Naive thymus-derived CD4-positive, alpha-beta T cell (primary cell): ENCODE measurements at regions of chr17 and their contacts with region 1.

Region 1: DNA sequence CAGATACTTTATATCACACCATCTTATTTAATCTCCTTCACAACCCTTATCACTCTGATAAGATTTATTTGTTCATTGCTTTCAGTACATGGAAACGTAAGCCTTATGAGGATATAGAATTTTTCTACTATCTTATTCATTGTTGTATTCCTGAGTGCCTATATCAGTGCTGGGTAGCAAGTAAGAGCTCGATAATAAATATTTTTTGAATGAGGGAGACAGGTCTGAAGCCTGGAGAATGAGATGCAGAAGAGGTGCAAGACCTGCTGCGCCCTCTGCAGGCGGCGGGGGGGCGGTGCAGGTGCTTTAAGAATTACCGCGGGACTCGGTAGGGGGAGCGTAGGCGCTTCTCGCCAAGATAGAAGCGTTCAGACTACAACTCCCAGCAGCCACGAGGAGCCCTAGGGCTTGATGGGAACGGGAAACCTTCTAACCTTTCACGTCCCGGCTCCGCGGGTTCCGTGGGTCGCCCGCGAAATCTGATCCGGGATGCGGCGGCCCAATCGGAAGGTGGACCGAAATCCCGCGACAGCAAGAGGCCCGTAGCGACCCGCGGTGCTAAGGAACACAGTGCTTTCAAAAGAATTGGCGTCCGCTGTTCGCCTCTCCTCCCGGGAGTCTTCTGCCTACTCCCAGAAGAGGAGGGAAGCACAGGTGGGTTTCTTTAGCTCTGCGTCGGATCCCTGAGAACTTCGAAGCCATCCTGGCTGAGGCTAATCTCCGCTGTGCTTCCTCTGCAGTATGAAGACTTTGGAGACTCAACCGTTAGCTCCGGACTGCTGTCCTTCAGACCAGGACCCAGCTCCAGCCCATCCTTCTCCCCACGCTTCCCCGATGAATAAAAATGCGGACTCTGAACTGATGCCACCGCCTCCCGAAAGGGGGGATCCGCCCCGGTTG is at the start of gene WRAP53:
- DNase-seq: peak; percentile 93 to 97 (median 96)
- ATAC-seq: peak; percentile 89
- H3K4me3 ChIP-seq: peak within 1 kb of the TSS; percentile 96
- H3K4me3 Mint-ChIP-seq: peak within 1 kb of the TSS; percentile 95 to 99 (median 97)
- H3K27ac ChIP-seq: peak within 1 kb of the TSS; percentile 96
- H3K27ac Mint-ChIP-seq: peak within 1 kb of the TSS; percentile 99 to 100 (median 100)
- H3K4me1 ChIP-seq: peaks cover 28 to 31% of the 10 kb centered on the region in 2 donors
- H3K4me1 Mint-ChIP-seq: peaks cover 31 to 47% (median 41%) of the 10 kb centered on the region in 7 donors
- H3K27me3 ChIP-seq: no peaks in the 10 kb centered on the region
- H3K27me3 Mint-ChIP-seq: no peaks in the 10 kb centered on the region
- total RNA-seq, gene WRAP53: 6.7 to 21.1 (median 9.6) TPM

Region 2: GRCh38 chr17:7252176-7253043 is 435.7 kb before region 1 on chr17 and contains the start of gene ELP5:
- CTCF ChIA-PET with region 1: no interaction called
- POLR2A ChIA-PET with region 1: interaction called, 3 read pairs
- intact Hi-C with region 1: loop called in 1 of 2 experiments (anchors 5 kb)
- DNase-seq: peak in 5 of 9 donors; percentile 73 to 90 (median 83)
- ATAC-seq: peak; percentile 69
- H3K4me3 ChIP-seq: peak within 1 kb of the TSS; percentile 91
- H3K4me3 Mint-ChIP-seq: peak within 1 kb of the TSS; percentile 85 to 98 (median 96)
- H3K27ac ChIP-seq: peak within 1 kb of the TSS; percentile 94
- H3K27ac Mint-ChIP-seq: peak within 1 kb of the TSS; percentile 95 to 100 (median 99)
- H3K4me1 ChIP-seq: peaks cover 22 to 32% of the 10 kb centered on the region in 2 donors
- H3K4me1 Mint-ChIP-seq: peaks cover 29 to 51% (median 42%) of the 10 kb centered on the region in 7 donors
- H3K27me3 ChIP-seq: no peaks in the 10 kb centered on the region
- H3K27me3 Mint-ChIP-seq: peaks cover 0 to 4% (median 0%) of the 10 kb centered on the region in 5 donors
- total RNA-seq, gene ELP5: 26.9 to 49.1 (median 32.9) TPM

Region 3: DNA sequence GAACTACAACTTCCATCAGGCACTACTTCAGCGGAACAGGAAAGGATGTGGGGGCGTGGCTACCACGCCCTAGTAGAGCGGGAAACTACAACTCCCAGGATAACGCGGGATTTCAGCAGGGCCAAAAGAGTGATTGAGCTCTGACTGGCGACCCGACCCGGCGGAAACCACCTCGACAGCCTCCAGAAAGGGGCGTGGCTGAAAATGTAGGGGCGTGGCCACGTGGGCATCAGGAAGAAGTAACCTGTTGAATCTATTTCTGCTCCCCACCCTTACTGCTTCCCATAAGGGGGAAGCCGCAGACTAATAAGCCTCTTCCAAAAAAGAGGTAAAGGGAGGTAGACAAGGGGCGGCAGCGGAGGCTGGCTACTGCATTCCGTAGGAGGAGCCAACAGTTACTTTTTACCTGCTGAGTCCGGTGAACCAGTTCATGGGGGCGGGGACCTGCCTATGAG is 252.9 kb before region 1 on chr17 and contains the start of gene TMEM102:
- CTCF ChIA-PET with region 1: interaction called, 12 read pairs
- POLR2A ChIA-PET with region 1: interaction called, 48 read pairs
- intact Hi-C with region 1: loop called (anchors 1 kb)
- DNase-seq: peak; percentile 92 to 99 (median 99)
- ATAC-seq: peak; percentile 94
- H3K4me3 ChIP-seq: peak within 1 kb of the TSS; percentile 65
- H3K4me3 Mint-ChIP-seq: peak within 1 kb of the TSS; percentile 86 to 96 (median 94)
- H3K27ac ChIP-seq: peak within 1 kb of the TSS; percentile 83
- H3K27ac Mint-ChIP-seq: peak within 1 kb of the TSS; percentile 89 to 97 (median 95)
- H3K4me1 ChIP-seq: peaks cover 16 to 38% of the 10 kb centered on the region in 2 donors
- H3K4me1 Mint-ChIP-seq: peaks cover 26 to 42% (median 36%) of the 10 kb centered on the region in 7 donors
- H3K27me3 ChIP-seq: peaks cover 0 to 9% of the 10 kb centered on the region in 2 donors
- H3K27me3 Mint-ChIP-seq: peaks cover 11 to 13% (median 12%) of the 10 kb centered on the region in 5 donors
- total RNA-seq, gene TMEM102: 8.2 to 19.1 (median 16.5) TPM

Region 4: DNA sequence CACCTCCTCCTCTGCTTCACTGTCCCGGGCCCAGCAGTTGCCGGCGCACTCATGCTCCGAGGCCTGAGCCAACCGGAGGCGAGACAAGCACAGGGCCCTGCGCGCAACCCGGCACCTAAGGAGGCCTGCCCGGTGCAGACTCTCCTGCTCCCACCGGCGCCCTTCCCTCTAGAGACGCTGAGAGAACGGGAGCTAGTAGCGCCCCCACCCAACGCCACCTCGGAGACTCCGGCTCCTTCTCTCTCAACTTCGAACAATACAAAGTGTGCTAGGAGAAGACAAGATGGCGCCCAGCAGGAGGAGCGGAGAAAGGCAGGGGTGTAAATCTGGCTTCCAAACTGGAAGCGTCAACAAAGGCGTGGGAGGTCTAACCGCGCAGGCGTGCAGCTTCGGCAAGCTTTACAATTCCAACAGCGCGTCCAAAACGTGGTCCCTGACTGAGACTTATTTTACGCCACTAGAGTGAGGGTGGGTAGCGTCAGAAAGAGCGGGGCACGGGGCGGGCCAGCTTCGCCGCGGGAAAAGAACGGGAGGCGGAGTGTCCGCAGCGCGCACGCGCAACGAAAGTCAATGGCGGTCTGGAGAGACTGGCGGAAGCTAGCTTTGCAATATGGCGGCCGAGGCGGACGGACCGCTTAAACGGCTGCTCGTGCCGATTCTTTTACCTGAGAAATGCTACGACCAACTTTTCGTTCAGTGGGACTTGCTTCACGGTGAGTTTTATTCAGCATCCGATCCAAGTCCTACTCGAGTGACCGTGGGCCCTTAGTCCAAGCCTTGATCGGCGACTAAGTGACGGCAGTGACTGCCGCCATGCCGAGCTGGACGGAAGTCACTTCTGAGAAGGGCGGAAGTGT is 104.7 kb before region 1 on chr17 and contains the start of gene MPDU1:
- CTCF ChIA-PET with region 1: interaction called, 10 read pairs
- POLR2A ChIA-PET with region 1: interaction called, 94 read pairs
- intact Hi-C with region 1: loop called (anchors 1 kb)
- DNase-seq: peak; percentile 89 to 98 (median 97)
- ATAC-seq: peak; percentile 80
- H3K4me3 ChIP-seq: peak within 1 kb of the TSS; percentile 100
- H3K4me3 Mint-ChIP-seq: peak within 1 kb of the TSS; percentile 89 to 100 (median 99)
- H3K27ac ChIP-seq: peak within 1 kb of the TSS; percentile 95
- H3K27ac Mint-ChIP-seq: peak within 1 kb of the TSS; percentile 98 to 100 (median 100)
- H3K4me1 ChIP-seq: peaks cover 28 to 35% of the 10 kb centered on the region in 2 donors
- H3K4me1 Mint-ChIP-seq: peaks cover 33 to 60% (median 55%) of the 10 kb centered on the region in 7 donors
- H3K27me3 ChIP-seq: no peaks in the 10 kb centered on the region
- H3K27me3 Mint-ChIP-seq: no peaks in the 10 kb centered on the region
- total RNA-seq, gene MPDU1: 25.4 to 79.8 (median 31.4) TPM

Region 5: GRCh38 chr17:7667656-7668406 is 20.3 kb before region 1 on chr17:
- CTCF ChIA-PET with region 1: interaction called, 5 read pairs
- POLR2A ChIA-PET with region 1: interaction called, 86 read pairs
- intact Hi-C with region 1: no loop called
- DNase-seq: no peak
- ATAC-seq: no peak
- H3K4me3 ChIP-seq: no peak overlapping the region
- H3K4me3 Mint-ChIP-seq: no peak overlapping the region
- H3K27ac ChIP-seq: no peak overlapping the region
- H3K27ac Mint-ChIP-seq: peak overlapping the region in 4 of 9 donors; percentile 13 to 70 (median 29)
- H3K4me1 ChIP-seq: no peaks in the 10 kb centered on the region
- H3K4me1 Mint-ChIP-seq: no peaks in the 10 kb centered on the region
- H3K27me3 ChIP-seq: no peaks in the 10 kb centered on the region
- H3K27me3 Mint-ChIP-seq: no peaks in the 10 kb centered on the region

Region 6: DNA sequence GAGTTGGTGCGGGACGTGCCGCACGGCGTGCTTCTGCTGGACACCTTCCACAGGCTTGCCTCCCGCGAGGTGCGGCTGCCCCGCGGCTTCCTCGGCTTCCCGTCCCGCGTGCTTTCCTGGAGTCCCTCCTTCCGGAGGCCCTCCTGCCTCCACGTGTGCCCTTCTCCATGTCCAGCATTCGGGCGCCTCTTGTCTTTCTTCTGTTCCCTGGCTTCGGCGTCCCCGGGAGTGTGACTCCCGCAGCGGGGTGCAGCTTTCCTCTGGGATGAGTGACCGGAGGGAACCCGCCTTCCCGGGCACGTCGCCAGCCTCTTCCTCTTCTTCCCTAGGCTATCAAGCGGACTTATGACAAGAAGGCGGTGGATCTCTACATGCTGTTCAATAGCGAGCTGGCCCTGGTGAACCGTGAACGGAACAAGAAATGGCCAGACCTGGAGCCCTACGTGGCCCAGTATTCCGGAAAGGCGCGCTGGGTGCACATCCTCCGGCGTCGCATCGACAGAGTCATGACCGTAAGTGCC is 52.4 kb after region 1 on chr17:
- CTCF ChIA-PET with region 1: no interaction called
- POLR2A ChIA-PET with region 1: no interaction called
- intact Hi-C with region 1: no loop called
- DNase-seq: no peak
- ATAC-seq: no peak
- H3K4me3 ChIP-seq: no peak overlapping the region
- H3K4me3 Mint-ChIP-seq: peak overlapping the region in 2 of 10 donors; percentile 59 to 67
- H3K27ac ChIP-seq: no peak overlapping the region
- H3K27ac Mint-ChIP-seq: no peak overlapping the region
- H3K4me1 ChIP-seq: no peaks in the 10 kb centered on the region
- H3K4me1 Mint-ChIP-seq: peaks cover 0 to 6% (median 0%) of the 10 kb centered on the region in 7 donors
- H3K27me3 ChIP-seq: no peaks in the 10 kb centered on the region
- H3K27me3 Mint-ChIP-seq: peaks cover 7 to 33% (median 27%) of the 10 kb centered on the region in 5 donors

Region 7: DNA sequence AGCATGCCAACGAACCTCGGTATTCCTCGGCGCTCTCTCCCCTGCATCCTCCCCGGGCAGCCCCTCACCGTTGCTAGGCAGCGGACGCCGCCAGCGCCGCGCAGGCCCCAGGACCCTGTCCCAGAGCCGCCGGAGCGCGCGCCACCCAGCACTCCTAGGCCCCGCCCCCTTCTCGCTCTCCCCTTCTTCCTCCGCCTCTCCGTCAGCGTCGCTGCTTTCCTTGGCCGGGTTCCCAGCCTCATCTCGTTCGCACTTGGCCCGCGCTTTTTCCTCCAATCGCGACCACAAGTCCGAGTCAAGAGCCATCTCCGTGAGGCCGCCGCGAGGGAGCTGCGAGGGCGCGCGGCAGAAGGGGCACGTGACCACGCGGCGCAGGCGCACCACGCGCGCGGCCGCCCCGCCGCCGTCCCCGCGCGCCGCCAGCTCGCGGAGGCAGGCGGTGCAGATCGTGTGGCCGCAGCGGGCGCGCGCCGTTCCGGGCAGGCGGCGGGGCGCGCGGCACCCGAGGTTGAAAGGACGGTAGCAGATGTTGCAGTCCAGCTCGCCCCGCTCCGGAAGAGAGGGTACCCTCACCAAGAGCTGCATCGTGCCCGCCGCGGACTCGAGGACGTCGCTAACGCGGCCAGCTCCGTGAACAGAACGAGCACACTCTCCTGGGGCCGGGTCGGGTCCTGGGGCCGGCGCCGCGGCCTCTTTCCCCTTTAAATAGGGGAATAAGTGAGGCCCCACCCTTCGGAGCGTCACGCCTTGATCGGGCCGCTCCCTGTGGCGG is 227.6 kb after region 1 on chr17 and contains the start of gene RNF227:
- CTCF ChIA-PET with region 1: no interaction called
- POLR2A ChIA-PET with region 1: interaction called, 13 read pairs
- intact Hi-C with region 1: no loop called
- DNase-seq: peak; percentile 74 to 90 (median 83)
- ATAC-seq: peak; percentile 88
- H3K4me3 ChIP-seq: peak within 1 kb of the TSS; percentile 91
- H3K4me3 Mint-ChIP-seq: peak within 1 kb of the TSS; percentile 64 to 98 (median 88)
- H3K27ac ChIP-seq: peak within 1 kb of the TSS; percentile 75
- H3K27ac Mint-ChIP-seq: peak within 1 kb of the TSS; percentile 82 to 95 (median 92)
- H3K4me1 ChIP-seq: peaks cover 20 to 22% of the 10 kb centered on the region in 2 donors
- H3K4me1 Mint-ChIP-seq: peaks cover 22 to 37% (median 35%) of the 10 kb centered on the region in 7 donors
- H3K27me3 ChIP-seq: no peaks in the 10 kb centered on the region
- H3K27me3 Mint-ChIP-seq: no peaks in the 10 kb centered on the region
- total RNA-seq, gene RNF227: 2.6 to 8.2 (median 5.5) TPM